Breast epithelium (tissue), 4 donors: ENCODE measurements at regions of chr1 and their contacts with region 1.

Region 1: DNA sequence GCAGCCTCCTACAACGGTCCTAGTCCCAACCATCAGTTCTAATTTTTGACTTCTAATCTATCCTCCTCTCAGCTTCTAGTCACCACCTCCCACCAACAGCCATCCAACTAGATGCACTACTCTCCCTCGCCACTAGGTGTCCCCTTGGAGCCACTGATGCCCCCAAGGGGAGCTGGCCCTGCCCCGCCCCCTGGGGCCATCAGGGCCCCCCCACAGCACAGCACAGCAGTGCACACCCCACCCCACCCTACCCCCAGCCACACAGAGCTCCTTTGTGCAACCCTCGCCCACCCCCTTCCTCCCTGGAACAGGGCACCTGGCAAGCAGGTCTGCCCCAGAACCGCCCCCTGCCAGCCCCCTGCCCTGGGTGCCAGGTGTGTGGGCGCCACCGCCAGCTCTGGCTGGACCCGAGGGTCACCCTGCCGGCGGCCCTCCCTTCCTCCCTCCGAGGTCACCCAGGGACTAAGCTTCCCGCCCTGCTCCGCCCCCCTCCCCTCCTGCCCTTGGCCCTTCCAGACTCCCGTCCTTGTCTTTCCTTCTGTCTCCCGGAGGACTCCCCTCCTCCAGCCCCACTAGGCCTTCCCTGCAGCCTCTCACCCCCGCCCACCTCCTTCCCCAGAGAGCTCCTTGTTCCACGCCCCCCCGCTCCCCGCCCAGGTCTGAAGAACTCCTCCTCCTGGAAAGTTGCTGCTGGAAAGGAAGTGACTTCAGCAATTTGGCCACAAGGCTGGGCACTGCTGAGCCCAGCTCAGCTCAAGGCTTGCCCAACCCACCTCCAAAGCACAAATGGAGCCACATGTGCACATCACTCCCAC is 47.0 kb downstream of the AHDC1 start:
- DNase-seq: peak; percentile 87 to 96
- H3K4me3 ChIP-seq: peak overlapping the region; percentile 16 to 52 (median 30)
- H3K27ac ChIP-seq: peak overlapping the region; percentile 87 to 92
- H3K4me1 ChIP-seq: peaks cover 25 to 31% of the 10 kb centered on the region in 2 donors
- H3K27me3 ChIP-seq: no peaks in the 10 kb centered on the region
- CTCF ChIP-seq: peak; percentile 75 to 93 (median 83)
- POLR2A ChIP-seq: no peak

Region 2: DNA sequence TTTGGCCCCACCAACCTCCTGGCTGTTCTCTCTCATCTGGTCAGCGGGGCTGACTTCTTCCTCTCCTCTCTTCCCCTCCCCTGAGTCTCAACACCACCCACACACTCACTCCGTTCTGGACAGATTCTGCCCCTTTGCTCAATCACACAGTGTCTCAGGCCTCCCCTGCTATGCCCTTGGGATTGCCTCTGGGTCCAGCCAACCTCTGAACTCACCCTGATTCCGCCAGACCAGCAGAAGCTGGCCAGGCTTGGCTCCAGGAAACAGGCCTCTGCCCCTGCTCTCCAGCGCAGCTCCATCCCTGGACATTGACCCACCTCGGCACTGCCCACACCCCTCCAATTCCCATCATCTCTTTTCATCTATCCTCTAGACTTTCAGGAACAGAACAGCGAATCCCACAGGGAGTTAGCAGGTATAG is 24.8 kb after region 1 on chr1:
- intact Hi-C with region 1: loop called (anchors 1 kb)
- DNase-seq: no peak
- H3K4me3 ChIP-seq: no peak overlapping the region
- H3K27ac ChIP-seq: peak overlapping the region; percentile 62 to 86
- H3K4me1 ChIP-seq: no peaks in the 10 kb centered on the region
- H3K27me3 ChIP-seq: no peaks in the 10 kb centered on the region
- CTCF ChIP-seq: no peak
- POLR2A ChIP-seq: no peak

Region 3: DNA sequence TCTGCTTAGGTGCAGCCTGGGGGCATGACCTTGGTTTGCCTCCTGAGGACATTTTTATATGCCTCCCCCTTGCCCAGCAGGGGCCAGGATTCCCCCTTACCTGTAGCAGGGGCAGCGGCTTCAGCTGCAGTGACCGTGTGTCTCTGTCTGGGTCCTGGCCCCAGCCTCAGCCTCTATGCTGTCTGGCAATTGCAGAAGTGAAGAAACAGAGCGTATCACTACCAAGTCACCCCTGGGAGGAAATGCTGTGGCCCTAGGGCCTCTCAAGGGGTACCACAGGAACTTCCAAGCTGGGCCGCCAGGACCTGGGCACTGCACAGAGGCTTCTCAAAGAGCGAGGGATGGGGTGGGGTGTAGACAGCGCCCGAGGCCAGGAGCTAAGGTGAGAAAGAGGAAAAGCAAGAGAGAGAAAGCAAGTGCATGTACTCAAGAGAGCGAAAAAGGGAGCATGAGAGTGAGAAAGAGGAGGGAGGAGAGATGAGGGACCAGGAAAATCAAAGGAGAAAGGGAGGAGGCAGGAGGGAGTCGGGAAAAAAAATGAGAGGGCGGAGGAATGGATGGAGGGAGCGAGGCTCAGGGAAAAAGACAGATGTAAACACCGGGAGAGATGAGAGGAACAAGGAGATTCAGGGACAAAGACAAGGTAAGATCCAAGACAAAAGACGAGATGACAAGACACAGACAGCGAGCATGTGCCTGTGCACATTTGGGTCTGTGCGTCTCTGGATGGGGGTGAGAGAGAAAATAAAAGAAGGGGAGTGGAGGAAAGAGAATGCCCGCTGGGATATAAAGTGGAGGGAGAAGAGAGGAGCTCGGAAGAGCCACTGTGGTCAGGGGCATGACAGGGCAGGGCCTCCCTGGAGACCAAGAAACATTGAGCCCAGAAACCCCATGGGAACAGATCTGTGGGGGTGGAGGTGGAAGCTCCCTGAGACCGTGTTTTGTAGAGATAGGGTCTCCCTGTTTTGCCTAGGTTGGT is 619.8 kb after region 1 on chr1 and contains the start of gene PTAFR:
- intact Hi-C with region 1: no loop called
- DNase-seq: no peak
- H3K4me3 ChIP-seq: peak within 1 kb of the TSS; percentile 5 to 15 (median 8)
- H3K27ac ChIP-seq: peak within 1 kb of the TSS in 1 of 2 donors; percentile 81
- H3K4me1 ChIP-seq: no peaks in the 10 kb centered on the region
- H3K27me3 ChIP-seq: no peaks in the 10 kb centered on the region
- CTCF ChIP-seq: no peak
- POLR2A ChIP-seq: no peak
- total RNA-seq, gene PTAFR: 5.6 to 8.3 (median 6.2) TPM